Tibial artery (tissue), 4 donors: ENCODE measurements at regions of chr21 and their contacts with region 1.

Region 1: DNA sequence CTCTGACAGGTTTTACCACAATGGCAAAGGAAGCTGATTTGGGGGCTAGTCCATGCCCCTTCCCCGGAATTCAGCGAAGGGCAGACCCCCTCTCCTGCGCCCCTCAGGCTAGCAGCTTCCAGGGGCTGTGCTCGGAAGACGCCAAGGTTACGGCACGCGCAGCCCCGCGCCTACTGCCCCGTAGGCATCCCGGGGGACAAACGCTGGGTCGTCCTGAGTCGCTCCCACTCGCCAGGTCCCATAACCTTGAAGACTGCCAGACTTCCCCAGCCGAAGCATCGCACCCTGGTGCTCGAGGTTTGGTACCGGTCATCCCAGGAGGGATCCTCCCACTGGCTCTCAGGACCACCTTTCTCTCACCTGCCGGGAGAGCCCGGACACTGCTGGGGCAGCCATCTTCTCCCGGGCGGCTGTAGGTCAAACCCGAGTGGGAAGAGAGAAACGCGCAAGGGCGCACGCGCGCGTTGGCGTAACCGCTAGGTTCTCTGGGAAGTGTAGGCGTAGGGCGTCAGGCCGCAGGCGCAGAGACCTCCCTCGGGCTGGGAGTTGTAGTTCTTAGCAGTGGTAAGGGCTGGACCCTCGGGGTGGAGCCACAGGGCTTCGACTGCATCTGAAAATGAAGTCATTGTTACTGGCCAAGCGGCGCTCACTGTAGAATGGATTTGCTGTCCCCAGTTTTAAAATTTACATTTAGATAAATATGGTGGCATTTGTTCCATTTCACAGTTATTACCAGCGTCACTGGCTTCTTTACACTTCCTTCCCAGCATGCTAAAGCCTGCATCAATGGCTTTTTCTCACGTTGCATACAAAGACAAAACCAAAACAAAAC is at the start of gene ATP5PO:
- DNase-seq: peak; percentile 97 to 98
- H3K4me3 ChIP-seq: peak within 1 kb of the TSS; percentile 77 to 78
- H3K27ac ChIP-seq: peak within 1 kb of the TSS; percentile 85 to 88
- H3K4me1 ChIP-seq: peaks cover 0 to 21% (median 13%) of the 10 kb centered on the region in 4 donors
- H3K27me3 ChIP-seq: no peaks in the 10 kb centered on the region
- CTCF ChIP-seq: peak in 1 of 2 experiments; percentile 8

Region 2: GRCh38 chr21:34336756-34337391 is 421.3 kb after region 1 on chr21:
- intact Hi-C with region 1: loop called (anchors 10 kb)
- DNase-seq: peak in 1 of 2 donors; percentile 78
- H3K4me3 ChIP-seq: no peak overlapping the region
- H3K27ac ChIP-seq: peak overlapping the region; percentile 70 to 79
- H3K4me1 ChIP-seq: peaks cover 0 to 89% (median 48%) of the 10 kb centered on the region in 4 donors
- H3K27me3 ChIP-seq: no peaks in the 10 kb centered on the region
- CTCF ChIP-seq: no peak

Region 3: DNA sequence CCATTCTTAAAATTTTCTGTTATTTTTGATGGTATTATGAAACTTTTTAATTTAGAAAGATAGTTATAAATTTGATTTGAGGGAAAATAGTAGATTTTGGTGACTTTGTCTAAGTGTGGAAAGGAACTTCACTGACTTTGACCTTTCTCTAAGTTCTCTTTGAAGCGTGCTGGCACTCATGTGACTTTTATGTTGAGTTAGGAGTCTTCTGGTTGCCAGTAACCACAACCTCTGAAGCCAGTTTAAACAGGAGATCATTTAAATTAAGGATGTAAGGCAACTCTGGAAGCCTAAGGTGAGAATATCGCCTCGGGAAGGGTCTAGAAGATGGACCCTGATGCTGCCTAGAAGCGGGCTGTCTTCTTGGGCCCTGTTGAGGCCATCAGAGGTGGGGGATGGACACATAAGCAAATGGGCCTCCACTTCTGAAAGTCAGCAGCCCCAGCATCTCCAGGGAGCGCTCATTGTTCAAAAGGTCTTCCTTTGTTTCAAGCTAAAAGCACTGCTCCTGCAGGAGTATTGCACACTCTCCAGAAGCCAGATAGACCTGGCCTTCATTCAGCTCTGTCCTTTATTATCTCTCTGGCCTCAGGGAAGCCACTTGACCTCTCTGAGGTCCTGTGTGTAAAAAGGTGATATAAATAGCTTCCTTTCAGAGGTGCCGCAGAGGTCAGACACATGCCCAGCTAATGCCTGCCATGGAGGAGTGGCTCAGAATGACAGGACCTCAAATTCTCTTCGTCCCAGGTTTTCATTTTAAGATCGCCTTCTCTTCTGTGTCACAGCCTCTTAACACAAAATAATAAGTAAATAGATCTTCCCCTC is 704.5 kb after region 1 on chr21:
- intact Hi-C with region 1: loop called (anchors 10 kb)
- DNase-seq: no peak
- H3K4me3 ChIP-seq: no peak overlapping the region
- H3K27ac ChIP-seq: no peak overlapping the region
- H3K4me1 ChIP-seq: peaks cover 0 to 6% (median 0%) of the 10 kb centered on the region in 4 donors
- H3K27me3 ChIP-seq: peaks cover 0 to 15% of the 10 kb centered on the region in 2 donors
- CTCF ChIP-seq: no peak